ENCODE measurements at regions of chr17 and their contacts with region 1.

Region 1: DNA sequence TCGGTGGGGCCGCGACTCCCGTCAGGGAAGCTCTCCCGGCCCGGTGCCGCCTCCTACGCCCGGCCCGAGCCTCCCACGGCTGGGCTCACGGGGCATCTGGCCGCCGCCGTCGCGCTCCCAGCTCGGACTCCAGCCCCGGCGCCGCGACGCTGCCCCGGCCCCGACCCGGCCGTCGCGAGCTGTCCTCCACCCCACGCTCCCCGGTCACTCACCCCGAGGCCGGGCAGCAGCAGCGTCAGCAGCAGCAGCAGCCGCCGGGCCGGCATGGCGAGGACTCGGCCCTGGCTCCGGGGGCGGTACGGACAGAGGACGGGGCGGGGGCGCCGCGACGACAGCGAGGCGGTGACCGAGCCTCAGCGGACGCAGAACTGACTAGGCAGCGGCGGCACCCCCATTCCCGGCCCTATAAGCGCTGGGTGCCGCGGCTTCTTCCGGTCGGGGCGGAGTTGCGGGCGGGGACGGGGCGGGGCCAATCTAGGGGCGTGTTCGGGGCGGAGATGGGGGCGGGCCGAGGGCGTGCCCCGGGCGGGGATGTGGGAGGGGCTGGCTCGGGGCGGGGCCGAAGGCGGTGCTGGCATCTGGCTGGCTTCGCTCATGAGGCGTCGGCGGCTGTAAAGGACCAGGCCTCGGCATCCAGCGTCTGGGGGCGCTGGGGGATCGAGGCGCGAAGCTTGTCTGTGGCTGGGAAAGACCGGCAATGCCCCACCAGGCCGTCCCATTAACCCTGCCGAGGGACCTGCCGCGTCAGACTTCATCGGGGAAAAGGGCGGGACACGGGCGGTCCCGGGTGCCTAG is at the start of gene ERN1:
- DNase-seq: peak; percentile 87
- H3K4me3 Mint-ChIP-seq: peak within 1 kb of the TSS; percentile 91
- H3K27ac Mint-ChIP-seq: peak within 1 kb of the TSS; percentile 88
- H3K4me1 Mint-ChIP-seq: peaks cover 52% of the 10 kb centered on the region
- H3K27me3 Mint-ChIP-seq: no peaks in the 10 kb centered on the region
- total RNA-seq, gene ERN1: 91.0 and 93.4 TPM in 2 replicates

Region 2: DNA sequence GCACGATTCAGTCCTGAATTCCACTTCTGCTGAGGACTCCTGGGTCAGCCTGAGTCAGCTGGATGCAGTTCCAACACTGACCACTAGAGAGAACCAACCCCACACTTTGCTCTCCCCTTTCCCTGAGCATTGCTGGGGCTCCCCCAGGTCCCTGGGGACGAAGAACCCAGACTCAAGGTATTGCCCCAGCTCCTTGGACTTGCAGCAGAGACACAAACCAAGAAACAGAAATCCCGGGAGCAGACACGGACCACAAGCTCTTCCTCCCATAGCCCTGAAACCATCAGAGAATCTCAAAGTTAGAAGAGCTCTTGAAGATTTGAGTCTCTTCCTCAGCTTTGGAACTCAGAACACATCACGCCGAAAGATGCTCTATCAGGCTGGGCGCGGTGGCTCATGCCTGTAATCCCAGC is 210.6 kb before region 1 on chr17:
- intact Hi-C with region 1: loop called (anchors 2 kb)
- DNase-seq: peak; percentile 64
- H3K4me3 Mint-ChIP-seq: no peak overlapping the region
- H3K27ac Mint-ChIP-seq: no peak overlapping the region
- H3K4me1 Mint-ChIP-seq: peaks cover 8% of the 10 kb centered on the region
- H3K27me3 Mint-ChIP-seq: peaks cover 8% of the 10 kb centered on the region

Region 3: DNA sequence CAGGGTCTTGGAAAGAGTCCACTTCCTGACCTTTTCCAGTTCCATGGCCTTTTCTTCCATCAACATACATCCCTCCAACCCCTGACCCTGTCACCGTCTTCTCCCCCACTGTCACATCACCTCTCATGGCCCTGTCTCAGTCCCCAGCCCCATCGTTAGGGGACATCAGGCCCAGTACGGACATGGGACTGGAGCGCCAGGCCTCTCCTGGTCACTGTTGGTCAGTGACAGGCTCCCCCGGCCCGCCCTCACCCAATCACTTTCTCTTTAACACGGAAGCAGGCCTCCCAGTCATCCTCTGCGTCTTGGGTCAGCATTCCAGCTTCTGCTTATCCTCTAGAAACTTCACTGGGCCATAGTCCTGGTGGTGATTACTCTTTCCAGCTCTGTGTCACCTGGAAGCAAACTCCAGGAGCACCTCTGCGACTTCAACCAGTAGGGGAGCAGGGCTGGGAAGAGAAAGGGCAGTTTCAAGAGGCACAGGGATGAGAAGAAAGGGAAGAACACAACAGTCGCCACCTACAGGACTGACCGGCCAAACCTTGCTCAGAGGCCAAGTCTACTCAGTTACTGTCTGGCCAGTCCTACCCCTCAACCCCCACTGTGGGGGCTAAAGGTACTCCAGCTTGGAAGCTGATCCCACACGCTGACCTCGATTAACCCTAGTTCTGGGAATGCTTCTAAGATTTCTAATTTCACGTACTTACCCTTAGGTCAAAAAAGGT is 93.6 kb before region 1 on chr17:
- intact Hi-C with region 1: no loop called
- DNase-seq: no peak
- H3K4me3 Mint-ChIP-seq: no peak overlapping the region
- H3K27ac Mint-ChIP-seq: no peak overlapping the region
- H3K4me1 Mint-ChIP-seq: no peaks in the 10 kb centered on the region
- H3K27me3 Mint-ChIP-seq: no peaks in the 10 kb centered on the region

Region 4: DNA sequence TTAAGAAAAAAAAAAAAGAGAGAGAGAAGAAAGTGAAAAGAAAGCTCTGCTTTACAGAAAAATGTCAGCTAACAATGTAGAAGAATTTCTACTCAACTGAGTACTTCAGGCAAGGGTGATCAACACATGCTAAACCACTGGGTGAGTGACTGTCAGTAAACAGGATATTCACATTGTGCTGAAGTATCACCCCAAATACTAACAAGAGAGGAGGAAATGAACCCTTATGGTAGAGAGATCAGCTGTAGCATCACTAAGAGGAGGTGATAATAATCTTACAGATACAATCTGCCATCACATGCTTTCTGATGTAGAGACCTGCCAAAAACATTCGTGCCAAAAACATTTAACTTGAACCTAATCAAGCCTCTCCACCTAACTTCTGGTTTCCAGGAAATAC is 78.8 kb before region 1 on chr17:
- intact Hi-C with region 1: loop called (anchors 1 kb)
- DNase-seq: peak; percentile 40
- H3K4me3 Mint-ChIP-seq: peak overlapping the region; percentile 45
- H3K27ac Mint-ChIP-seq: peak overlapping the region; percentile 91
- H3K4me1 Mint-ChIP-seq: peaks cover 35% of the 10 kb centered on the region
- H3K27me3 Mint-ChIP-seq: no peaks in the 10 kb centered on the region

Region 5: DNA sequence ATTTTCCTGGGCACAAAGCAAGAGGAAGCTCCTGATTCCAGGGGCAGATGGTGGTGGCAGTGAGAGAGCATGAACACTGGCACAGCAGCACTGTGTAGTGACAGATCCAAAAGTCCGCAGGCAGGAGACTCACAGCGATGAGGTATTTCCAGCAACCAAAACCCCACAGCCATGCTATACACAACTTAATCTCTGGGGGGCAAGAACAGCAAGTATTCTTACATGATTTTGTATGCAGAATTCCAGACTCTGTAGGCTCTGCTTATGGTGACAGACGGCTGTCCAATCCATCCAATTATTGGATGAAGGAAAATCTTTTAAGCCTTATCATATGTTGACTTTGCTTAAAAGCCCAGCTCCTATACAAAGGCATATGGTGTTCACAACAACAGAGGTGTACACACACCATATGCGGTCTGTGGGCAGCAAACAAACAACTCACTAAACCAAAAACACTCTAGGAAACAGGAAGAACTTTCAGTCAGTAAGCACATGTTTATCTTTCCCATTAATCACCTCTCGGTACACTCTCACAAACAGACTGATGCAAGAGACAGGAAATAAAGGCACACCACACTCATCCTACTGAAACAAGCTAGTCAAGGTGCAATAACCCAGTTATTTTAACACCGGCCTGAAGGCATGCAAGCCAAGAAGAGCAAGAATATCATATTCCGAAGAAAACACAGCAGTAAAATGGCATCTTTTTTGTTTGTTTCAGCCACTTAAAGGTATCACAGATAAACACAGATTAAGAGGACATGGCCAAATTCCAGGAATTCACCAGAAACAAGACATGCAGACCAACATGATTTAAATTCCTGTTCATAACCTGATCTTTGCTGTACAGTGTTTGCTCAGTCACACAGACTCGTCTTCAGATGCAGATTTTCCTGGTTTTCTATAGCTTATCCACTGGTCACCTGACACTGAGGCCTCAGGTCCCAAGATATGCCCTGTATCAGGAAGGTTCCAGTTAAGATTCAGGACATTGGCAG is 47.9 kb before region 1 on chr17:
- intact Hi-C with region 1: loop called (anchors 1 kb)
- DNase-seq: peak; percentile 39
- H3K4me3 Mint-ChIP-seq: peak overlapping the region; percentile 67
- H3K27ac Mint-ChIP-seq: peak overlapping the region; percentile 89
- H3K4me1 Mint-ChIP-seq: peaks cover 46% of the 10 kb centered on the region
- H3K27me3 Mint-ChIP-seq: no peaks in the 10 kb centered on the region

Region 6: DNA sequence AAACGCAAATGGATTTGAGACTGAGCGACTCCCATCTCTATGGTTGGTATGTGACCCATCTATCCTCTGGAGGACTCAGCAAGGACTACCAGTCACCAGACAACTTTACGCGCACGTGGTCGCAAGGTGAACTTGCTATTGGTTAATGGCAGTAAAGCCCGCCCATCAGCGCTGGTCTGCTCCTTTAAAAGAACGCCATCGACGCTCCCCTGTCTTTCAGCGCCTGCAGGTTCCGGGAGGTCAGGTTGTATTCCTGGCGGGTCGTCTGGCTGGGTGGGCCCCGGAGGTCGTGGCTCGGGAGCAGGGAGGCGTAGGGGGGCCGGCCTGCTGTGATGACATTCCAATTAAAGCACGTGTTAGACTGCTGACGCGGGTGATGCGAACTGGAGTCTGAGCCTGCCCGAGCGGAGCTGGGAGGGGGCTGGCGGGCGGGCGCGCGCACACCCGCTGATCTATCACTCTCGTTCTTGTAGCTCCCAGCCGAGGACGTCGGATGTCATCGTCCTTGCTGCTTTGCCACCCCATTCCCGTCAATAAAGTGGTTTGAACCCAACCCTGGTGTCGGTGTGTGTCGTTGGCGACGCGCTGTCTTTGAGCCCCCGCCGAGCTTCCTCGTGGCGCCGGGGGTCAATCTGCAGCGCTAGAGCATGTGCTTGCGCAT is 15.9 kb after region 1 on chr17:
- intact Hi-C with region 1: loop called (anchors 2 kb)
- DNase-seq: peak; percentile 94
- H3K4me3 Mint-ChIP-seq: no peak overlapping the region
- H3K27ac Mint-ChIP-seq: no peak overlapping the region
- H3K4me1 Mint-ChIP-seq: peaks cover 21% of the 10 kb centered on the region
- H3K27me3 Mint-ChIP-seq: no peaks in the 10 kb centered on the region